Activated CD4-positive, alpha-beta T cell treated with anti-CD3 and anti-CD28 coated beads, Interleukin-2, amount 10 ng/mL, durations not matched to agents 24 days and 14 days (primary cell): ENCODE measurements at regions of chr5 and their contacts with region 1.

Region 1: DNA sequence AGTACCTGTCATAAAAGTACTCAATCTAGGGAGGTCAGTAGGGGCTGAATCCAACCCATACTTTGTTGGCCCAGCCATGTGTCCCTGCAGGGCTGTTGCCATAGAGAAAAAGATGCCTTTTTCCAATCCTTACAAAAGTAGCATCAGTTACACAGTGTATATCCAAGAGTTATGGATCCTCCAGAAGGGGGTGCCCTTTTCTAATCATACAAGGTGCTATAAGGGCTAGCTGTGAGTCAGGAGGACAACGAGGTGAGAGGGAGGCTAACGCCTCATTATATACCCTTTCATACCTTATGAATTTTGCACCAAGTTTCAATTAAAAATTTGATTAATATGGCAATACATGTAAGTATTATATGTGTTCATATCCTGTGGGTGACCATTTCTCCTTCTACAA is 4.8 kb downstream of the KIAA0825 start:
- DNase-seq: no peak
- H3K4me3 Mint-ChIP-seq: no peak overlapping the region
- H3K27ac Mint-ChIP-seq: no peak overlapping the region
- H3K4me1 Mint-ChIP-seq: peaks cover 17% of the 10 kb centered on the region
- H3K27me3 Mint-ChIP-seq: no peaks in the 10 kb centered on the region

Region 2: DNA sequence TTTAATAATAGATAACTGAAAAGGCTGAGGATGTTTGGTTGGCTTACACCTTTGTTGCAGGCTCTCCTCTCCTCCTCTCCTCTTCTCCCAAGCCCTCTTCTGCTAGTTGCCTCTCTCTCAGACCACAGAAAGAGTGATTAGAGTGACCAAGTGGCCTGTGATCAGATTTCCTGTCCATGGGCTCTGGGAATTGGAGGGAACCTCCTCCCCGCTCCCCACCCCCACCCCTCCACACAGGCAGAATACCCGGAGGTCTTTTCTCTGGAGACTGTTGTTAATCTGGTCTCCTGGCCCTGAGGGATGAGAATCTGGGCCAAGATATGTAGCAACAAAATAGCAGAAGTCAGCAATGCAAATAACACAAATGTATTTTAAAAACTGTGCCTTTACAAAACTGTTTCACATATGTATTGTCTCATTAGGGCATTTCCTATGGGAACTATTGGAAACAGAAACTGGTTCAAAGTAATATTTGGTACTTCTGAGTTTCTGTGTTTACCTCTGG is 1393.9 kb before region 1 on chr5:
- intact Hi-C with region 1: no loop called
- DNase-seq: no peak
- H3K4me3 Mint-ChIP-seq: no peak overlapping the region
- H3K27ac Mint-ChIP-seq: no peak overlapping the region
- H3K4me1 Mint-ChIP-seq: no peaks in the 10 kb centered on the region
- H3K27me3 Mint-ChIP-seq: no peaks in the 10 kb centered on the region

Region 3: DNA sequence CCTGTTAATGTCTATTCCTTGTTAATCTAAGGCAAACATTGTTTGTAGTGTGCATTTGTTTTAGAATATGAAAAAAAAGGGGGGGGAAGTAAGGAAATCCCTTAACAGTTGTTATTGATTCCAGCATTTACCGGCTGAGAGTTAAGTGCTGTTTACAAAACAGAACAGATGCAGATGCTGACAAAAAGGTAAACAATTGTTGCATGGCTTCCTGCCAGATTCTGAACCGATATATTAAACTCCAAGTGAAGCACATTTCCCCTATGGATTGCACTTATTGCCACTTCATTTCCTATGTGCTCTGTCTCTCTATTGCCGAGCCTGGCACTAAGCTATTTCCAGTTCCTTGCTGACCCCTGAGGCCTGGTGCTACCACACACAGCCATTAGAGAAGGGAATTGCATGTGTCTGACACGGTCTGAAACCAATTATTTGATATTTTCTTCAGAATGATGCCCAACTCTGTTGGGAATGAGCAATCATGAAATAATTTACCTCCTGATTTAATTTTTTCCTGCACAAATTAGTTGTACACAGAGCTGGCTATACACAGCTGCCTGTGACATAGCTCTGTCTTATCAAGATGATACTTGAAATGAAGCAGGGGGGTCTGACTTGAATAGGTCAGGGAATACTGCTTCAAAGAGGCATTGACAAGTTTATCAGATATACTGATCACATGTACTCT is 105.0 kb before region 1 on chr5:
- intact Hi-C with region 1: no loop called
- DNase-seq: no peak
- H3K4me3 Mint-ChIP-seq: no peak overlapping the region
- H3K27ac Mint-ChIP-seq: no peak overlapping the region
- H3K4me1 Mint-ChIP-seq: no peaks in the 10 kb centered on the region
- H3K27me3 Mint-ChIP-seq: no peaks in the 10 kb centered on the region

Region 4: GRCh38 chr5:94740286-94740685 is 126.7 kb after region 1 on chr5:
- intact Hi-C with region 1: loop called (anchors 2 kb)
- DNase-seq: no peak
- H3K4me3 Mint-ChIP-seq: no peak overlapping the region
- H3K27ac Mint-ChIP-seq: no peak overlapping the region
- H3K4me1 Mint-ChIP-seq: peaks cover 2% of the 10 kb centered on the region
- H3K27me3 Mint-ChIP-seq: peaks cover 2% of the 10 kb centered on the region